G401 (cell line): ENCODE measurements at regions of chr11 and their contacts with region 1.

Region 1: DNA sequence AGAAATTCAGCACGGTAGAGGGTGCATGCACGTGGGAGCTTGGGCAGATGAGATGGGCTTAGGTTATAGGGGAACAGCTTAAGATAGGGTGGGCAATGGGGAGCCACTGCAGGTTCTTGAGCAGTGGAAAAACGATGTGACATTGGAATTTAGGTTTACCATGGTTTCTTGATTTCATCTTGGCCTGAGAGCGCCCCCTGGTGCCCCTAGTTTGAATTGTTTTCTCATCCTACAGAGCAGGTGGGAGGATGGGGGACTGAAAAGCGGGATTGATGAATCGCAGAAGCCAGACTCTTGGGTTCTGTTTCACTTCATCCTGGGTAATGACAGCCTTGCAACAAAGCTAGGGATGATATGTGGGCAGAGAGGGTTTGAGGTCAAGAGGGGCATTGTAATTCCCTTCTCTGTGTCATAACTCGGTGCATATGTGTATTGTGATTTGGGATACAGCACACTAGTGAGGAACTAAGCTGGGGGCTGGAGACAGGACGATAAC is 6.7 kb upstream of the MCAM start:
- DNase-seq: peak; percentile 87

Region 2: GRCh38 chr11:119121008-119121810 is 202.4 kb before region 1 on chr11 and contains the start of gene HINFP:
- in situ Hi-C with region 1: loop called (anchors 25 kb)
- DNase-seq: peak; percentile 100
- total RNA-seq, gene HINFP: 18.5 and 22.4 TPM in 2 replicates